ENCODE measurements at regions of chr6 and their contacts with region 1.

Region 1: GRCh38 chr6:12289933-12290820 is at the start of gene EDN1:
- DNase-seq: peak; percentile 86
- H3K4me3 Mint-ChIP-seq: peak within 1 kb of the TSS; percentile 81
- H3K27ac Mint-ChIP-seq: peak within 1 kb of the TSS; percentile 92
- H3K4me1 Mint-ChIP-seq: peaks cover 35% of the 10 kb centered on the region
- H3K27me3 Mint-ChIP-seq: no peaks in the 10 kb centered on the region
- CTCF ChIP-seq: no peak
- total RNA-seq, gene EDN1: 24.7 and 40.6 TPM in 2 replicates

Region 2: DNA sequence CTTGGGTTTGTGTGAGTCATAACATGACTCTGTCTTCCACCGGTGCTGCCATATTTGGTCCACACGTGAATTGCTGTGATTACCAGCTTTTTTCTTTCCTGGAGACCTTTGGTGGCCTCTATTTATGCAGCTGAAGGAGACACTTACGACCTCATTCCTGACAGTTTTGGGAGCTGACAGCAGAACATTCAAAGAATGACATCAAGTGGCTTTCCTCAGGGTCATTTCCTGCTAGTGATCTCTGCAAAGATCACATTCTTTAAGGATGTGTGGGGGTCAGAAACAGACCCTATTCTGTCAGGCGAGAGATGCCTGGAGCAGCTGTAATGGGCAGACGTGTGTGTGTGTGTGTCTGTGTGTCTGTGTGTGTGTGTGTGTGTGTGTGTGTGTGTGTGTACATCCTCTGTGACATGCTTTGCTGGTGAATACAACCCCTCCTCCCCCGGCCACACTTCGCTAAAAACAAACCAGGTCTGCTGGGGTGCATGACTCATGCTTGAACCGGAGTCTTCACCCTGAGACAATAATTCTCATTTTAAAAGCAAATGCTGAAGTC is 637.1 kb before region 1 on chr6:
- CTCF ChIA-PET with region 1: interaction called, 6 read pairs
- intact Hi-C with region 1: loop called (anchors 1 kb)
- DNase-seq: peak; percentile 42
- H3K4me3 Mint-ChIP-seq: no peak overlapping the region
- H3K27ac Mint-ChIP-seq: no peak overlapping the region
- H3K4me1 Mint-ChIP-seq: peaks cover 7% of the 10 kb centered on the region
- H3K27me3 Mint-ChIP-seq: no peaks in the 10 kb centered on the region
- CTCF ChIP-seq: no peak

Region 3: DNA sequence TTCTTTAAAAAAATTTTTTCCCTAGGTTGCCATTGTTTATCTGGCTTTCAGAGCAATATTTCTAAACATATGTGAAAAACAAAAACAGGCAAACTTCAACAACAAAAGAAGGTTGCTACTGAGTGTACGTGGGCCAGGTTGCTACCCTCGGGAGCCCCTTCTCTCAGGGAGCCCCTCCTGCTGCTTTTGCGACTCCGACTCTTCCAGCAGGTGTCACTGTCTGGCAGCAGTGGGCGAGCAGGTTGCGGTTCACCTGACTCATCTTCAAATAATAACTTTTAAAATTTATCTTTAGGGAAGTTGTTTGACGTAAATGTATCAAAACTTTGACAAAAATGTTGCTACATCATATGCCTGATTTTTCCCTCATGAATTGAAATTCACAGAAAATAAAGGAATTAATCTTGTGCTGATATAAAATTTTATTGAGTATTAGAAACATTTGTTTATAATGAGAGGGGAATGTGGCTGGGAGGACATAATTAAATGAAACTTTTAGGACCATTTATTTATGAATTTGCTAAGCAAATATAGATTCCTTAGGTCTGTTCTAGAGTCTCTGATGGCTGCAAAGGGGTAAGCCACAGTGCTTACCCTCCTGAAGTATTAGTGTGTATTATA is 139.3 kb before region 1 on chr6:
- CTCF ChIA-PET with region 1: no interaction called
- intact Hi-C with region 1: loop called (anchors 1 kb)
- DNase-seq: peak; percentile 56
- H3K4me3 Mint-ChIP-seq: no peak overlapping the region
- H3K27ac Mint-ChIP-seq: no peak overlapping the region
- H3K4me1 Mint-ChIP-seq: peaks cover 25% of the 10 kb centered on the region
- H3K27me3 Mint-ChIP-seq: no peaks in the 10 kb centered on the region
- CTCF ChIP-seq: peak; percentile 62

Region 4: DNA sequence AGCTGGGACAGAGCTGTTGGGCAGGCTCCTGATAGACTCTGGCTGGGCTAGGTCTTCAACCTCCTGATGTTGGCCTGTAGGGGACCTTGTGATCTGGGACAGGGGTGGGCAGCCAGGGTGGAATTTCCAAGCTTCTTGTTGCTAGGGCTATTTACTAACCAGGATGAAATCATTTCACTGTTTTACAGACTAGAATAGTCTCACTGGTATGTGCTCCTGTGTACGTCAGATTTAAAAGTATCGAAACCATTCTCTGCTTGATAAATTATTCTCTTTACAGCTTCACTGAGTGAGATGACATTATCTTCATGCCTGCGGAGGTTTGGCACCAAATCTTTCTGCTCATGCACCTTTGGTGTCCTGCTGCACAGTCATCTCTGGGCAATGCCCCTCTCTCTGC is 10.8 kb after region 1 on chr6:
- CTCF ChIA-PET with region 1: no interaction called
- intact Hi-C with region 1: no loop called
- DNase-seq: no peak
- H3K4me3 Mint-ChIP-seq: no peak overlapping the region
- H3K27ac Mint-ChIP-seq: no peak overlapping the region
- H3K4me1 Mint-ChIP-seq: peaks cover 46% of the 10 kb centered on the region
- H3K27me3 Mint-ChIP-seq: no peaks in the 10 kb centered on the region
- CTCF ChIP-seq: no peak

Region 5: GRCh38 chr6:12343440-12344162 is 53.4 kb after region 1 on chr6:
- CTCF ChIA-PET with region 1: no interaction called
- intact Hi-C with region 1: loop called (anchors 5 kb)
- DNase-seq: peak; percentile 59
- H3K4me3 Mint-ChIP-seq: peak overlapping the region; percentile 39
- H3K27ac Mint-ChIP-seq: peak overlapping the region; percentile 83
- H3K4me1 Mint-ChIP-seq: peaks cover 67% of the 10 kb centered on the region
- H3K27me3 Mint-ChIP-seq: no peaks in the 10 kb centered on the region
- CTCF ChIP-seq: no peak

Region 6: GRCh38 chr6:12419631-12420272 is 129.6 kb after region 1 on chr6:
- CTCF ChIA-PET with region 1: no interaction called
- intact Hi-C with region 1: no loop called
- DNase-seq: no peak
- H3K4me3 Mint-ChIP-seq: no peak overlapping the region
- H3K27ac Mint-ChIP-seq: no peak overlapping the region
- H3K4me1 Mint-ChIP-seq: peaks cover 15% of the 10 kb centered on the region
- H3K27me3 Mint-ChIP-seq: no peaks in the 10 kb centered on the region
- CTCF ChIP-seq: no peak

Region 7: DNA sequence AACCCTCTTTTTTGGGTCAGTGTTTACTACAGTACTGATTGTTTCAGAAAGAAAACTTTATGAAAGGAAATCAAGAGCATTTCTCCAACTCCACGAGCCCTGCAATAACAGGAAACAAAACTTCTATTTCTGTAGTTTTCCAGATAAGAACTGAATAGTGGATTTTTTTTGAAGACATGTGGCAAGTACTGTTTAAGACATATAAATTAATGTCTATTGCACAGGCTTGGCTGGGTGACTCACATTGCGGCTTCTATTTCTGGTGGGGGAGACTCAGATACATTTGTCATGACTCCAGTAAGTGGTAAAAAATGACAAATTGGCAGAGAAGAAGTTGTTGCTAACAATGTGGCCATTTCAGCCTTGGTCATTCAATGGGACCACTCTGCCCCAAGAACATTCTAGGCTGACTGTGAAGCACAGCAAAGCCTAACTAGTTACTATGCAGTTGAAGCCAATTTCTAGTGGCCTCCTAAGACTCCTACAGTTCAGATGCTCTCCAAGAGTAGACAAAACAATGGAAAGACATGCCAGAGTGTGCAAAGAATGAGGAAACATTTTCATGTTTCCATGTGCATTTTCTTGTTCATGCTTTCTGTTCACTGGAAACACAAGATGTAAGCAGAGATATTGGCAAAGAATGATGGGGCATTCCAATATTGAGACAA is 200.9 kb after region 1 on chr6:
- CTCF ChIA-PET with region 1: interaction called, 3 read pairs
- intact Hi-C with region 1: loop called (anchors 5 kb)
- DNase-seq: peak; percentile 39
- H3K4me3 Mint-ChIP-seq: no peak overlapping the region
- H3K27ac Mint-ChIP-seq: peak overlapping the region; percentile 77
- H3K4me1 Mint-ChIP-seq: peaks cover 33% of the 10 kb centered on the region
- H3K27me3 Mint-ChIP-seq: no peaks in the 10 kb centered on the region
- CTCF ChIP-seq: no peak

Region 8: GRCh38 chr6:13101409-13101808 is 811.2 kb after region 1 on chr6:
- CTCF ChIA-PET with region 1: no interaction called
- intact Hi-C with region 1: no loop called
- DNase-seq: no peak
- H3K4me3 Mint-ChIP-seq: no peak overlapping the region
- H3K27ac Mint-ChIP-seq: no peak overlapping the region
- H3K4me1 Mint-ChIP-seq: no peaks in the 10 kb centered on the region
- H3K27me3 Mint-ChIP-seq: peaks cover 9% of the 10 kb centered on the region
- CTCF ChIP-seq: no peak

Measured in Calu3 (cell line).